H1 (cell line): ENCODE measurements at regions of chr16 and their contacts with region 1.

Region 1: DNA sequence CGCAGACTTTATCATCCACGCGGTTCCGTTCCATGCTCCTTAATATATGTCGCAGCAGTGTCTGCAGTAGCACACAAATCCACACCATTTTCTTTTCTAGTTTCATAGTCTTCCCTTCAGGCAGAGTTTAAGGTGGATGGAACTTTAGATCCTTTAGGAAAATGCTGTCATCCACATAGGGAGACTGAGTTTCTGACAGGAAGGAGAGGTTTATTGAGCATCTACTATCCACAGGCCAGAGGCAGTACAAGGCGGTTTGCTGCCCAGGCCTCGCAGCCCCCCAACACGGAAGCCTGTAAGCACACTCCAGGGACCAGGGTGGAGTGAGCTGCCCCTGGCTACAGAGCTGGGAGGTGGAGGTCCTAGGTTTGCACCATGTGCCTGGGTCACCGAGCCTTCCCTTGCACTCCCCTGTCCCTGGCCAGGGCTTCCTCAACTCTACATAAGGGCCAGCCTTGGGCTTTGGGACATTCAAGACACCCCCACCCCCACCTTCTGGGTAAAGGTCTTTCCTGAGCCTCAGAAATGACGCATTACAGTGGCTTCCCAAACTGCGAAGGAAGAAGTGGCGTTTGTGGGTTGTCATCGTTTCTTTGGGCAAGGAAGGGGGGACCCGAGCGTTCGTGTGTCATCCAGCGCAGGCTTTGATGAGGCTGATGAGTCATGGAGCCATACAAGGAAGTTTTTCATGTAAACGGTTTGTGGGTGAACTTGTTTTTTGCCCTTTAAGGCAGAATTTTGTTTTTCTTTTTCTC is 146.5 kb upstream of the PLCG2 start:
- DNase-seq: no peak
- H3K4me3 ChIP-seq: no peak overlapping the region
- H3K27ac ChIP-seq: peak overlapping the region; percentile 41; the same call in 1 of the 2 replicates
- H3K4me1 ChIP-seq: peaks cover 8 to 43% (median 16%) of the 10 kb centered on the region in 4 experiments
- H3K27me3 ChIP-seq: no peaks in the 10 kb centered on the region
- CTCF ChIP-seq: no peak
- EP300 ChIP-seq: no peak
- POLR2A ChIP-seq: no peak
- RAD21 ChIP-seq: no peak

Region 2: GRCh38 chr16:81158964-81159363 is 473.6 kb before region 1 on chr16:
- CTCF ChIA-PET with region 1: no interaction called
- POLR2A ChIA-PET with region 1: no interaction called
- DNase-seq: no peak
- H3K4me3 ChIP-seq: no peak overlapping the region
- H3K27ac ChIP-seq: no peak overlapping the region
- H3K4me1 ChIP-seq: no peaks in the 10 kb centered on the region
- H3K27me3 ChIP-seq: no peaks in the 10 kb centered on the region
- CTCF ChIP-seq: no peak
- EP300 ChIP-seq: no peak
- POLR2A ChIP-seq: no peak
- RAD21 ChIP-seq: no peak

Region 3: DNA sequence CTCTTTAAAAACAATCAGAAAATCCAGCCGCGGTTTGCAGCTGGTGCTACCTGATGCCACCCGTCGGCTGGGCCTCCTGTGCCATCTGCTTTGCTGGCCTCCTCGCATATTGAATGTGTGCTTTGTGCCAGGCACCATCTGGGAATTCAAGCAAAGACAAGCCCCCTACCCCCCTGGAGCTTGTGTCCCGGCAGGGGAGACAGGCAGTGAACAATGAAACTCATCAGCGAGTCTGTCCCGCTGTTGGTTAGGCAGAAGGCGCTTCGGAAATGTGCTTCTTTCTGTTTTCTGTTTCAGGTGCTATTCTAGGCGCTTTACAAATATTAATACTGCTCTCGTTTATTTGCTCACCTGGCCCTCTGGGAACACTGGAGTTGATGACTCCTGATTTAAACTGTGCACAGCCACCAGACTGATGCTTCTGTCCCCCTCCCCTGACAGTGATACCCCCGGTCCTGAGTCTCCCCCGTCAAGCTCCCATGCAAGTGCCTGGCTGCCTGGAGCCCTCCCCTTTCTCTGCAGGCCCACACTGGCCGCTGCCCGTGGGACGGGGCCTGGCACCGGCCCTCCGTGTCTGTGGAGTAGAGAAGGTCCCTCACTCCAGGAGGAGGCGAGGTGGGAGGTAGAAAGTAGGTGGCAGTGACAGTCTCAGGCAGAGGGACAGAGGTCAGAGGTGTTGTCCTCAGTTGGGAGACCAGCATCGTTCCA is 20.4 kb after region 1 on chr16:
- CTCF ChIA-PET with region 1: interaction called, 11 read pairs
- POLR2A ChIA-PET with region 1: interaction called, 4 read pairs
- DNase-seq: no peak
- H3K4me3 ChIP-seq: peak overlapping the region in 1 of 4 experiments; percentile 9; a peak in 1 of 8 replicates
- H3K27ac ChIP-seq: peak overlapping the region; percentile 14; the same call in 1 of the 2 replicates
- H3K4me1 ChIP-seq: peaks cover 7 to 23% (median 17%) of the 10 kb centered on the region in 4 experiments
- H3K27me3 ChIP-seq: no peaks in the 10 kb centered on the region
- CTCF ChIP-seq: no peak
- EP300 ChIP-seq: no peak
- POLR2A ChIP-seq: no peak
- RAD21 ChIP-seq: no peak